HEK293 (cell line): ENCODE measurements at regions of chr12 and their contacts with region 1.

Region 1: DNA sequence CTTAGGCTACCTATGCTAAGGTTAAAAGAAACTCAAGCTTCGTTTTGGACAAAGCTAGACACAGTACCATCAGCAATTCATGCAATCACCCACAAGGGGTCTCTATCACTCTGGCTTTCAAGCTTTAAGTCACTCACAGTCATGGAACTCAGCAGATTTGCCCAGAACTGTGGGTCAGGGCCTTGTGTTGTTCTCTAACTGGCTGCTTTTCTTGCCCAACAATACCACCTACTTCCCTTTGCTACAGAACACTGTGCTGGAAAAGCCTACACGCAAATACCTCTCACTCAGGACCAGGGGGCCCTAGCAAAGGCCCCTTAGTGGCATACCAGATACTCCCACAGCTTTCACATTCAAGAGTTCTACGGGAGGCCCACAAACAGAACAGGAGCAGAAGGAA is 9.1 kb downstream of the NEMP1 start:
- H3K4me3 ChIP-seq: no peak overlapping the region
- H3K27ac ChIP-seq: no peak overlapping the region
- H3K4me1 ChIP-seq: no peaks in the 10 kb centered on the region
- CTCF ChIP-seq: peak; percentile 69

Region 2: DNA sequence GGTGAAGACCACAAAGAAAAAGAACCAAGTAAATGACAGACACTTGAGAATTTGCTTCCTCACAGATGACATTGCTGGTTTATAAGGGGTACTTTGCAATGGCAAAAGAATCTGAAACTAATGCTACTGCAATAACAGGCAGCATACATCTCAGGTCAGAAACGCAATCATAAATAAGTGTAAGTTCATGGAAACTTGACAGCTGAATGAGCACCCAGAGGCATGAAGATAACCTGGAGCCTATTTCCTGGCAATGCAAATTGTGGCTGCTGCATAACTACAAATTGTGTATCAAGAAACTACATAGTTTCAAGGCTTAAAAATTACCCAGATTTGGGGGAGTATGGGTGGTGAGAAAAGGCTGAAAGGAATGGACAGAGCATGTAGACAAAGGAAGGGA is 11.1 kb before region 1 on chr12:
- CTCF ChIA-PET with region 1: interaction called, 23 read pairs
- POLR2A ChIA-PET with region 1: no interaction called
- H3K4me3 ChIP-seq: no peak overlapping the region
- H3K27ac ChIP-seq: no peak overlapping the region
- H3K4me1 ChIP-seq: no peaks in the 10 kb centered on the region
- CTCF ChIP-seq: no peak

Region 3: DNA sequence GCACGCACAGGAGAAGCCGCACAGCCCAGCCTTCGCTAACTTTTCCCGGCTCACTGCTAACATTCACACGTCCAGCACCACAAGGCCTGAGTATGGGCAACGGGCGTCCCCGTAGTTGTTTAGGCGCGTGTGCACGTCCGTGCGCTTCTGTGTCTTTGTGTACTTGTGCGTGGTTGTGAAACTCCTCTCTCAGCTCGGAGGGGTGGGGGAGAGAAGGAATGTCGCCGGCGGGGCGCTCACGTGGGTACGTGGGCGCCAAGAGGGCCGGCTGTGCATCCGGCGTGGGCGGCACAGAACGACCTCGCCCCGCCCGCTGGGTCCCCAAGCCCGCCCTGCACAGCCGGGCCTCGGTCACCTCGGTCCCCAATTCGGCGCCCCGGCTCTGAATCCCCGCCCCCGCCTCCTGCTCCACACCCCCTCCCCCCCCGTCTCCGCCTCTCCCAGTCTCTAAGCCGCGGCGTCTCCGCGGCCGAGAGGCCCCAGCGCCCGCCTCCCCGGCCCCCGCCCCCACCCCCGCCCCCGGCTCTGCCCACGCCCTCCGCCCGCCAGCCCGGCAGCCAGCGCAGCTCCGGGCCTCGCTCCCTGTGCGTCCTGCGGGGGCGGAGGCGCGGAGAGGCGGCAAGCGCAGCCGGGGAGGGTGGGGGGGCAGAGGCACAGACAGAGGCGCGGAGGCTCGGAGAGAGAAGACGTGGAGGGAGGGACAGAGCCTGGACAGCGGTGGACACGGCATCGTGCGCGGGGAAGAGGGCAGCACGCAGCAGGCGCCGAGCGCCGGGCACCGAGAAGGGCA is 19.1 kb after region 1 on chr12 and contains the start of gene NAB2:
- CTCF ChIA-PET with region 1: interaction called, 48 read pairs
- POLR2A ChIA-PET with region 1: interaction called, 7 read pairs
- H3K4me3 ChIP-seq: peak within 1 kb of the TSS; percentile 84
- H3K27ac ChIP-seq: peak within 1 kb of the TSS; percentile 80
- H3K4me1 ChIP-seq: peaks cover 12% of the 10 kb centered on the region
- CTCF ChIP-seq: no peak; the same call in 1 of the 2 replicates

Region 4: DNA sequence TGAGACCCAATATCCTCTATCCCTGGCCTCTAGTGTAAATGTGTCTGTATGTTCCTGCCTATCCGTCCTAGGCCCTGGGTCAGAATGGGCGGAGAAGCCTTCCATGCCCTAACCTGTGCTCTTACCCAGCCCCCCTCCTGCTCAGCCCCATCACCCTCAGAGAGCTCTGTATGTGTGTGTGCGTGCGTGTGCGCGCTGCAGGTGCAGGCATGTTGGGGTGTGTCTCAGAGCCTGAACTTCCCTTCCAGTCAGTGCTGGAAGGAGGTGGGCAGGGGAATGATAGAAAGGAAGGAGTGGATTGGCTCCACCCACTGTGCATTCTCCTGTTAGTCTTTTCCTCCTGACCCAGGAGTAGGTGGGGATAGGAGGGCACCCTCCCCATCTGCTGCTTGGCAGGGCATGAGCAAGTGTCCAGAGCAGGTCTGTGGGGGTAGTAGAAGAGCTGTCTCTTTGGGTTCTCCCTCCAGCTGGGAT is 26.6 kb after region 1 on chr12:
- CTCF ChIA-PET with region 1: interaction called, 48 read pairs
- POLR2A ChIA-PET with region 1: interaction called, 5 read pairs
- H3K4me3 ChIP-seq: no peak overlapping the region
- H3K27ac ChIP-seq: no peak overlapping the region
- H3K4me1 ChIP-seq: no peaks in the 10 kb centered on the region
- CTCF ChIP-seq: no peak

Region 5: DNA sequence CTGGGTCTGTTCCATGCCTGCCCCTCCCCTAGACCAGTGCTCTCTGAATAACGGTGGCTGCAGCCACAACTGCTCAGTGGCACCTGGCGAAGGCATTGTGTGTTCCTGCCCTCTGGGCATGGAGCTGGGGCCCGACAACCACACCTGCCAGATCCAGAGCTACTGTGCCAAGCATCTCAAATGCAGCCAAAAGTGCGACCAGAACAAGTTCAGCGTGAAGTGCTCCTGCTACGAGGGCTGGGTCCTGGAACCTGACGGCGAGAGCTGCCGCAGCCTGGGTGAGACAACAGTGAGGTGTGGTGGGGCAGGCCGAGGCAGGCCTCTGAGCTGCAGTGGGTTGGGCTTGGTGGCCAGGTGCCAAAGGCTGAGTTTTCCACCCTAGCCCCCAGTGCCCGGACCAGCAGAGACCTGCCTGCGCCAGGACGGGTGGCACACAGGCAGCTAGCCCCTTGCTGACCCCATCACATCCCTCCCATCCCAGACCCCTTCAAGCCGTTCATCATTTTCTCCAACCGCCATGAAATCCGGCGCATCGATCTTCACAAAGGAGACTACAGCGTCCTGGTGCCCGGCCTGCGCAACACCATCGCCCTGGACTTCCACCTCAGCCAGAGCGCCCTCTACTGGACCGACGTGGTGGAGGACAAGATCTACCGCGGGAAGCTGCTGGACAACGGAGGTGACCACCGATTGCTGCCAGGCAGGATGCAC is 106.1 kb after region 1 on chr12:
- CTCF ChIA-PET with region 1: interaction called, 16 read pairs
- POLR2A ChIA-PET with region 1: no interaction called
- H3K4me3 ChIP-seq: no peak overlapping the region
- H3K27ac ChIP-seq: no peak overlapping the region
- H3K4me1 ChIP-seq: no peaks in the 10 kb centered on the region
- CTCF ChIP-seq: peak; percentile 92

Region 6: GRCh38 chr12:57182921-57183790 is 113.6 kb after region 1 on chr12:
- CTCF ChIA-PET with region 1: interaction called, 16 read pairs
- POLR2A ChIA-PET with region 1: interaction called, 3 read pairs
- H3K4me3 ChIP-seq: no peak overlapping the region
- H3K27ac ChIP-seq: no peak overlapping the region
- H3K4me1 ChIP-seq: no peaks in the 10 kb centered on the region
- CTCF ChIP-seq: peak; percentile 91